Activated T-helper 2 cell treated with anti-CD3 and anti-CD28 coated beads, Interferon-gamma antibody, Interleukin-2, Interleukin-4, amounts not matched to agents 10 μg/mL and 5 μg/mL and 100 μg/mL, durations not matched to agents 14 hours and 24 hours and 36 hours (primary cell): ENCODE measurements at regions of chr4 and their contacts with region 1.

Region 1: GRCh38 chr4:22688236-22688635 is 4.5 kb upstream of the GBA3 start:
- DNase-seq: no peak
- H3K4me3 Mint-ChIP-seq: no peak overlapping the region
- H3K27ac Mint-ChIP-seq: no peak overlapping the region
- H3K4me1 Mint-ChIP-seq: peaks cover 9% of the 10 kb centered on the region
- H3K27me3 Mint-ChIP-seq: peaks cover 2% of the 10 kb centered on the region

Region 2: GRCh38 chr4:21790438-21791029 is 897.7 kb before region 1 on chr4:
- intact Hi-C with region 1: loop called (anchors 5 kb)
- DNase-seq: no peak
- H3K4me3 Mint-ChIP-seq: no peak overlapping the region
- H3K27ac Mint-ChIP-seq: no peak overlapping the region
- H3K4me1 Mint-ChIP-seq: no peaks in the 10 kb centered on the region
- H3K27me3 Mint-ChIP-seq: no peaks in the 10 kb centered on the region

Region 3: GRCh38 chr4:22237155-22237751 is 451.0 kb before region 1 on chr4:
- intact Hi-C with region 1: loop called (anchors 5 kb)
- DNase-seq: peak; percentile 57
- H3K4me3 Mint-ChIP-seq: peak overlapping the region; percentile 64
- H3K27ac Mint-ChIP-seq: no peak overlapping the region
- H3K4me1 Mint-ChIP-seq: peaks cover 21% of the 10 kb centered on the region
- H3K27me3 Mint-ChIP-seq: no peaks in the 10 kb centered on the region

Region 4: DNA sequence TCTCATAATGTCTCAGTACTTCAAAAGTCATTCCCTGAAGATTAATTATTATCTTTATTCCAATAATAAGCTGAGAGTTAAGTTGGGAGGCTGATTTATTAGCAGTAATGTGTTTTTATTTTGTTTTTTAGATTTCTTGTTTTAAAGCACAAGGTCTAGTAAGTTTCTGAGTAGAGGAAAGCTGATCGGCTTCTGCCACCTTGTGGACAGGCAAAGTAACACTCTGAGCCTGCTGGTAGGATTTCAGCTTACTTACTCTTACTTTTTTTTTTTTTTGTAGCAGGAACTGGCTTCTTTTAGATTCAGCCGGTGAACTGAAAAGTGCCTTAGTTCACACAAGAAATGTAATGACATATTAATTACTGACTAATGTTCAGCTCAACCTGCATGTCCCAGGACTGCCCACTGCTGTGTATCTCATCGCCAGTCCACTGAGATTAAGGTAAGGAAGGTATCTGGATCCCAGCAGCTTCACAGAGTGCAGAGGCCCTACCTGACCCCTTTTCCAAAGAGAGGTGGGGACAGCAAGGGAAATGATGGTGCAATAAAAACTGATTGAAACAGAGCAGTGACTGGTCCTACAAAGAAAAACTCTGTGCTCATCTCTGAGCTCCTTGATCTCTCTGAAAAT is 298.9 kb before region 1 on chr4:
- intact Hi-C with region 1: no loop called
- DNase-seq: peak; percentile 29
- H3K4me3 Mint-ChIP-seq: no peak overlapping the region
- H3K27ac Mint-ChIP-seq: no peak overlapping the region
- H3K4me1 Mint-ChIP-seq: peaks cover 17% of the 10 kb centered on the region
- H3K27me3 Mint-ChIP-seq: no peaks in the 10 kb centered on the region

Region 5: GRCh38 chr4:22410645-22411247 is 277.5 kb before region 1 on chr4:
- intact Hi-C with region 1: loop called (anchors 2 kb)
- DNase-seq: no peak
- H3K4me3 Mint-ChIP-seq: no peak overlapping the region
- H3K27ac Mint-ChIP-seq: no peak overlapping the region
- H3K4me1 Mint-ChIP-seq: peaks cover 17% of the 10 kb centered on the region
- H3K27me3 Mint-ChIP-seq: no peaks in the 10 kb centered on the region

Region 6: GRCh38 chr4:23422878-23423277 is 734.6 kb after region 1 on chr4:
- intact Hi-C with region 1: no loop called
- DNase-seq: no peak
- H3K4me3 Mint-ChIP-seq: no peak overlapping the region
- H3K27ac Mint-ChIP-seq: no peak overlapping the region
- H3K4me1 Mint-ChIP-seq: peaks cover 2% of the 10 kb centered on the region
- H3K27me3 Mint-ChIP-seq: no peaks in the 10 kb centered on the region